Breast epithelium (tissue), 4 donors: ENCODE measurements at regions of chr19 and their contacts with region 1.

Region 1: DNA sequence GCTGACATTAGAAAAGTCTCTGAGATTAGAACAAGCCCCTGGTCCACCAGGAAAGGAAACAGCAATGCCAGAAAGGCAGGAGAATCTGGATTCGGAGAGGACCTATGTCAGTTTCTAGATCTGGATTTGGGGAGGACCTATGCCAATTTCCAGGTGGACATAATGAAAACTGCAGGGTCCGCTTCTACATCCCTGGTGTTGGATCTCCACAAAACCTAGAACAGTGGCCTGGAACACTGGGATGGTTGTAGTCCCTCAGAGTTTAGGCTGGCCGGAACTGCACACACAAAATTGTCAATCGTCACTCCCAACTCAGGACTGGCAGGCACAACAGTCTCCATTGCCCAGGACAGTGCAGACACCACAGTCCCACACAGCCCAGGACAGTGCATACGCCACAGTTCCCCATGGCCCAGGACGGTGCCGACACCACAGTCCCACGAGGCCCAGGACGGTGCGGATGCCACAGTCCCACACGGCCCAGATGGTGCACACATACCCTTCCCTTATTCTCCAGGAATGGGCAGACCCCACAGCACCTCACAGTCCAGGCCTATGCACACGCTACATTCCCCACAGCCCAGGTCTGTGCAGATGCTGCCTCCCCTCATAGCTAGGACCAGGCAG is 341.7 kb downstream of the UQCRFS1 start:
- DNase-seq: no peak
- H3K4me3 ChIP-seq: no peak overlapping the region
- H3K27ac ChIP-seq: peak overlapping the region in 1 of 2 donors; percentile 43
- H3K4me1 ChIP-seq: no peaks in the 10 kb centered on the region
- H3K27me3 ChIP-seq: peaks cover 0 to 9% of the 10 kb centered on the region in 2 donors
- CTCF ChIP-seq: no peak
- POLR2A ChIP-seq: no peak

Region 2: DNA sequence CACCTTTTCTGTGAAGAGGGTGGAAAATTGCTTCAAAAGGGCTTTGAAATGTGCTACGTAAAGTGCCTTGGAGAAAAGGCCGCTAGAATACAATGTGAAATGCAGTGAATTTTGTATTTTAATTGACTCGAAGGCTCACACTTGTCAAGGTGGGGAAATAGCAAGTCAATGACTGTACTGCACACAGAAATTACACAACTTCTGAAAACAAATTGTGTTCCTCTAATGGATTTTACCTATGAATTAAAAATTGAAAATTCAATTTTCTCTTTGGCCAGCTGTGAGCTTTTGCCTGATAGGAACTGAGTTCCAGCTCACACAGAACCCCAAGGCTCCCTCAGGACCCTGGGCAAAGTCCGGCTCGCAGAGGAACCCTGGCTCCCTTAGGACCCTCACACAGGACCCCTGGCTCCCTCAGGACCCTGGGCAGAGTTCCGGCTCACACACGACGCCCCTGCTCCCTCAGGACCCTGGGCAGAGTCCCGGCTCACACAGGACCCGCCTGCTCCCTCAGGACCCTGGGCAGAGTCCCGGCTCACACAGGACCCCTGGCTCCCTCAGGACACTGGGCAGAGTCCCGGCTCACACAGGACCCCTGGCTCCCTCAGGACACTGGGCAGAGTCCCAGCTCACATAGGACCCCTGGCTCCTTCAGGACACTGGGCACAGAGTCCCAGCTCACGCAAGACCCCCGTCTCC is 16.9 kb after region 1 on chr19:
- intact Hi-C with region 1: loop called (anchors 1 kb)
- DNase-seq: no peak
- H3K4me3 ChIP-seq: no peak overlapping the region
- H3K27ac ChIP-seq: no peak overlapping the region
- H3K4me1 ChIP-seq: no peaks in the 10 kb centered on the region
- H3K27me3 ChIP-seq: no peaks in the 10 kb centered on the region
- CTCF ChIP-seq: no peak
- POLR2A ChIP-seq: no peak

Region 3: GRCh38 chr19:28929006-28929405 is 57.8 kb after region 1 on chr19:
- intact Hi-C with region 1: no loop called
- DNase-seq: no peak
- H3K4me3 ChIP-seq: no peak overlapping the region
- H3K27ac ChIP-seq: no peak overlapping the region
- H3K4me1 ChIP-seq: no peaks in the 10 kb centered on the region
- H3K27me3 ChIP-seq: no peaks in the 10 kb centered on the region
- CTCF ChIP-seq: no peak
- POLR2A ChIP-seq: no peak

Region 4: DNA sequence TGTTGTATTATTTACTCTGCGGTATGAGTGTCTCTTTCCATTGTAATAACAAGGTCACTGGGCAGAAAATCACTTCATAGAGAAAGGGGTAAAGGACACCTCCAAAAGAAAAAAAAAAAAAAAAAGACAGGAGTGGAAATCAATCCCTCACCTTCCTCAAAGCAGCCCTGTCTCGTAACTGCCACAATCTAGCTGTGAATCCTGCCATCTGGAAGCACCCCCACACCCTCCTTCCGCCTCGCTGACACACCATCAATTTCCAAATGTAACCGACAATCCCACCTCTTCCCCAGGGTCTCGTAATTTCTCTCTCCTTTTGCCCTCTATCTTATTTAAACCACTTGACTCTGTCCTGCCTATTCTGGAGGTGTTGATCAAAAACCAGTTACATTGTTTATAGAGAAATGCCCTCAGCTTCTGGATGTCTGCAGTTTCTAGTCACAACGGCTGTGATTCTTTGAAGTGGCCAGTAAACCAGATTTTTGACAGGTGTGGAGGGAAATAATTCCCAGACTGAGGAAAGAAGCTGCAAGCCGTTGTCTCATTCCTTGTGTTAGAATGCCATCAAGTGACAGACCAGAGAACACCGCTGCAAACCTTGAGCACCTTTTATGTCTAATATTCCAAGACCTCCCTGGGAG is 725.8 kb after region 1 on chr19:
- intact Hi-C with region 1: no loop called
- DNase-seq: no peak
- H3K4me3 ChIP-seq: no peak overlapping the region
- H3K27ac ChIP-seq: no peak overlapping the region
- H3K4me1 ChIP-seq: no peaks in the 10 kb centered on the region
- H3K27me3 ChIP-seq: peaks cover 0 to 54% of the 10 kb centered on the region in 2 donors
- CTCF ChIP-seq: no peak
- POLR2A ChIP-seq: no peak